ENCODE measurements at regions of chr15 and their contacts with region 1.

Region 1: DNA sequence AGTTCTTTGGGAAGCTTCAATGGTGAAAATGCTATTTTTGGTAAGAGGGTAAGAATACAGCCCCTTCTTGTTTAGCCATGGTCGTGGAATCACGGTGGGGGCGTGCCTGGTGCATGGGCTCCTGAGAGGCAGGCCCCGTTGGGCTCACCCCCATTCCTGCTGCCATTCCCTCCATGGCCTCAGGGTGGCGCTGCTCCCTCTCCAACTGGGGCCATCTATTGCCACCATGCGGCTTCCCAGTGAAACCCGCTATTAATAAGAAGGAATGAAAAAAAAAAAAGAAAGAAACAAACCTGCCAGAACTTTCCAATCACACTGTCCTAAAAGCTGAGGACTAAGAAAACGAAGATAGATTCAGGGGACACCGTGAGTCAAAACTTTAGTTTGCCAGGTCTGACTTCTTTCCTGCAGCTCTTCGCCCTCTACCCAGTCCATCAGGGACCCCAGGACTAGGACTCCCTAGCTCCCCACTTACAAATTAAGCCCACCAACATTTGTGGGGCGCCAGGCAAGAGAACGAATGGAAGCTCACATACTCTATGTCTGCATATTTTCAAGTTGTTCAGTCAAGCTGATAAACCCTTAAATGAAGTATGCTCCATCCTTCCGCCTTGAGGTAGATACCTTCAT is 30.6 kb upstream of the ABHD2 start:
- DNase-seq: peak; percentile 82
- H3K4me3 Mint-ChIP-seq: no peak overlapping the region
- H3K27ac Mint-ChIP-seq: no peak overlapping the region
- H3K4me1 Mint-ChIP-seq: peaks cover 6% of the 10 kb centered on the region
- H3K27me3 Mint-ChIP-seq: peaks cover 5% of the 10 kb centered on the region

Region 2: GRCh38 chr15:89041507-89041906 is 16.1 kb before region 1 on chr15:
- CTCF ChIA-PET with region 1: no interaction called
- POLR2A ChIA-PET with region 1: no interaction called
- DNase-seq: no peak
- H3K4me3 Mint-ChIP-seq: no peak overlapping the region
- H3K27ac Mint-ChIP-seq: no peak overlapping the region
- H3K4me1 Mint-ChIP-seq: no peaks in the 10 kb centered on the region
- H3K27me3 Mint-ChIP-seq: peaks cover 16% of the 10 kb centered on the region

Region 3: DNA sequence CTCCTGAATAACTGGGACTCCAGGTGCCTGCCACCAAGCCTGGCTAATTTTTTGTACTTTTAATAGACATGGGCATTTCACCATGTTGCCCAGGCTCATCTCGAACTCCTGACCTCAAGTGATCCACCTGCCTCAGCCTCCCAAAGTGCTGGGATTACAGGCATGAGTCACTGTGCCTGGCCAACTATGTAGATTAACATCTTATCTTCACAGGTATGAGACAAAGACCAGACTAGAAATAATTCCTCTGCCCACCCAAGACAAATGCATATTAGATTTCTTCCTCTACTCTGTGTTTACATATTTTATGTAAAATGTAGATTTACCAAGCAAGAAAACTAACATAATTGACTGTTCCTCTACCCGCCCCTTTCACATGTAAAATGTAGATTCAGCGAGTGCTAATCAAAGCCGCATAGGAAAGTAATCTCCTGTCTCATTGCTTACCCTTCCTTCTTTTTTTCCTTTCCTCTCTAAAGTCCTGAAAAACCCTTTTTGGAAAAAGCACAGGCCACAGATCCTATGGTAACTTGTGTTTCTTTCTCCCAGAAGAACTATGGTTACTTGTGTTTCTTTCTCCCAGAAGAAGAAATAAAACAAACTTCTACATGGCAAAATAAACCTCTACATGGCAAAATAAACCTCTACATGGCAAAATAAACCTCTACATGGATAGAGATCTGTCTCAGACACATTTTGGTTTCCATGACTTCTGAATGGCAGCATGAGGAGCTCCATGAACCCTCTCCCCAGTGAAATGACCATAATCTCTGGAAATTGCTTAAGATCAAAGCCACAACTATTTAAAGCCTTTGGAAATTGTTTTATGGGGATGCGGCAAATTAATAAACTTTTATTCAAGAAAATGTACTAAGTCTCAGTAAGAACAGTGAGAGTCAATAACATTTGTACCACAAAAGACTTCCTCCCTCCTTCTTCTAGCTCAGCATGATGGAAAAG is 21.5 kb after region 1 on chr15:
- CTCF ChIA-PET with region 1: interaction called, 10 read pairs
- POLR2A ChIA-PET with region 1: no interaction called
- DNase-seq: no peak
- H3K4me3 Mint-ChIP-seq: no peak overlapping the region
- H3K27ac Mint-ChIP-seq: no peak overlapping the region
- H3K4me1 Mint-ChIP-seq: no peaks in the 10 kb centered on the region
- H3K27me3 Mint-ChIP-seq: peaks cover 14% of the 10 kb centered on the region

Region 4: DNA sequence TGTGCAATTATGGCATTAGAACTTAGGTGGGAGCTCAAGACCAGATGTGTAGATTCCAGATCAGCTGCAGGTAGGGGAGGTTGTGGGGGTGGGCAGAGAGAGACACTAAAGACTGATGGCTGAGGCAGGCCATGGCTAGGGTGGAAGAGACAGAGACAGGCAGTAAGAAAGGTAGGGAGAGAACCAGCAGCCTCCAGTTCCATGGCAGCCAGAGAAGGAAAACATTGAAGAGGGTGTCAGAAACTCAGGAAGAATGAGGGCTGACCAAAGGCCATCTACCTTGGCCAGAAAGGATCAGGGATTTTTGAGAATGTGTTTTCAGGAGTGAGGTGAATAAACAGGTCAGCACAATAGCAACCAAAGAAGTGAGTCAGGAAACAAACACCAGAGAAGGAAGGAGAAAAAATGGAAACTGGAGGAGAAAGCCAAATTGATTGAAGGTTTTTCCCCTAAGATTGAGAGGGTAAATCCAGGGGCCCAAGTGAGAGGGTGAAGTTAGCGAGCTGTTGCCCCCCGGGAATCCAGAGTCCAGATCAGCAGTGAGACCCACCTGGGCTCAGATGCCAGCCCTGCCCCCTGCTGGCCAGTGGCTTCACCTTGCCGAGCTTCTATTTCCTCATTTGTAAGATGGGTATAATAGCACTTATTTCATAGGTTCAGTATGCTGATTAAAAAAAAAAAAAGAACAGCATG is 71.7 kb after region 1 on chr15:
- CTCF ChIA-PET with region 1: interaction called, 11 read pairs
- POLR2A ChIA-PET with region 1: no interaction called
- DNase-seq: peak; percentile 51
- H3K4me3 Mint-ChIP-seq: no peak overlapping the region
- H3K27ac Mint-ChIP-seq: no peak overlapping the region
- H3K4me1 Mint-ChIP-seq: peaks cover 16% of the 10 kb centered on the region
- H3K27me3 Mint-ChIP-seq: no peaks in the 10 kb centered on the region

Region 5: GRCh38 chr15:89171136-89172072 is 113.8 kb after region 1 on chr15:
- CTCF ChIA-PET with region 1: interaction called, 10 read pairs
- POLR2A ChIA-PET with region 1: no interaction called
- DNase-seq: peak; percentile 24
- H3K4me3 Mint-ChIP-seq: no peak overlapping the region
- H3K27ac Mint-ChIP-seq: peak overlapping the region; percentile 43
- H3K4me1 Mint-ChIP-seq: peaks cover 11% of the 10 kb centered on the region
- H3K27me3 Mint-ChIP-seq: no peaks in the 10 kb centered on the region

Region 6: DNA sequence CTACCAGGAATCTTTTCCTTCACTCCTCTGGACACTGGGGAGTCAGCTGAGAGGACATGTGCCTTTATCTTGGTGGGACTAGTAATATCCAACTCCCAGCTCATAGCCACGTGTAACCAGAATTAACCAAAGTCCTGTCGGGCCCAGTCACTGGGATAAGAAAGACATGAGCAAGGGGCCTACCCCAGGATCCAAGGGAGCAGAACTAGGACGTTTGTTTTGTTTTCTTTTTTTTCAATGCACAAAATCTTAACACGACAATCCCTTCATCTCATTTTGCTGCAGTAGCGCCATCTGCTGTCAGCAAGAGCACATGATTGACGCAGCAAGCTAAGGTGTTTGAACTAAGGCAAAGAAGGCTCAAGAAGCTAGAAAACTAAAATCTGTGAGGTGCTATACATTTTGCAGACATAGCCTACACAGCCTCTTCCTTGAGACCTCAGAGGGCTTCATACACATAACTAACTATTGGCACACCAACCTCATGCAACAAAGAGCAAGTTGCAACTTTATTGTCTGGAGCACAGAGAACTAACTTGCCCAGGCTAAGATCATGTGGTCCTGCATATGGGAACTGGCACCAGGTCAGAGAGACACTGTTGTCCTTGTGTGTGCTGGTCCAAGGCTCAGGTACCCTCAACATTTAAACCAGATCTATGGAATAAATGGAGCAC is 120.2 kb after region 1 on chr15:
- CTCF ChIA-PET with region 1: interaction called, 20 read pairs
- POLR2A ChIA-PET with region 1: no interaction called
- DNase-seq: peak; percentile 80
- H3K4me3 Mint-ChIP-seq: no peak overlapping the region
- H3K27ac Mint-ChIP-seq: peak overlapping the region; percentile 58
- H3K4me1 Mint-ChIP-seq: peaks cover 13% of the 10 kb centered on the region
- H3K27me3 Mint-ChIP-seq: no peaks in the 10 kb centered on the region

Measured in activated CD4-positive, alpha-beta T cell treated with anti-CD3 and anti-CD28 coated beads, Interleukin-2, amount 10 ng/mL, durations not matched to agents 7 days and 5 days (primary cell).